Activated CD4-positive, alpha-beta T cell treated with anti-CD3 and anti-CD28 coated beads for 36 hours (primary cell): ENCODE measurements at regions of chr5 and their contacts with region 1.

Region 1: DNA sequence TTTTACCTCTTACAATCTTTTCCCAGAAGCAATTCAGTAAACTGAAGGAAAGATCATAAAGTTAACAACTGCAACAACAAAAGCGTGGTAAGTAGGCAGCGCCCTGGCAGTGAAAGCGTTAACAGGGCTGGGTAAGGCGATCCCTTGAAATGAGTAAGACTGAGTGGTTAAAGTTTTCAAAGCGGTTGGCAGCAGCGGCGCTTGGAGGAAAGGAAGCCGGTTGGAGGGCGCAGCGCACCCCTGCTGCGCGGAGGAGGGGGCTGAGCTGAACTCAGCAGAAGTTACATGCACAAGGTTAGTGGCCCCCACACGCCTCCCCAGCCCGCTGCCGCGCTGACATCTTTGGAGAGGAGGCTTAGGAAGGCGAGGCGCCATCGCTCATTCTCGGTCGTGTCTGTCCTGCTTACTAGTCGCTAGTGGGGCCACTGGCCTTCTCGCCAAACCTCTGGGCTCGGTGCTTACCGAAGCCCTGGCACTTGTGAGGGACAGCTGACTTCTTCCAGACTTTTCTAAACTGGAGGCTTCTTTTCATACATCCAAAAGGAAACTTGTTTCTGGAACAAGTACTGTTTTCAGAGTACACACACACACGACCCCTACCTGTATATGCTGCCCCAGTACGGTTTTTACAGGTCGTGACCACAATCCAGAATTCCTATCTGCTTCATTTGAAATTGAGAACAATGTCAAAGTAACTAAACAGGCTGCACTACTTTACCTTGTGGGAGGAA is at the start of gene SH3RF2:
- DNase-seq: peak; percentile 74
- ATAC-seq: peak; percentile 66
- H3K4me3 Mint-ChIP-seq: peak within 1 kb of the TSS; percentile 58
- H3K27ac Mint-ChIP-seq: peak within 1 kb of the TSS; percentile 63
- H3K4me1 Mint-ChIP-seq: peaks cover 37% of the 10 kb centered on the region
- H3K27me3 Mint-ChIP-seq: peaks cover 69% of the 10 kb centered on the region
- total RNA-seq, gene SH3RF2: 0.43 to 0.63 TPM

Region 2: GRCh38 chr5:145834917-145835847 is 101.4 kb before region 1 on chr5 and contains the start of gene PRELID2:
- CTCF ChIA-PET with region 1: no interaction called
- POLR2A ChIA-PET with region 1: no interaction called
- intact Hi-C with region 1: loop called in 1 of 2 experiments (anchors 5 kb)
- DNase-seq: peak; percentile 75
- ATAC-seq: peak; percentile 85
- H3K4me3 Mint-ChIP-seq: peak within 1 kb of the TSS; percentile 53
- H3K27ac Mint-ChIP-seq: no peak within 1 kb of the TSS
- H3K4me1 Mint-ChIP-seq: peaks cover 11% of the 10 kb centered on the region
- H3K27me3 Mint-ChIP-seq: peaks cover 13% of the 10 kb centered on the region
- total RNA-seq, gene PRELID2: 3.2 to 3.3 TPM

Region 3: GRCh38 chr5:146880966-146881365 is 944.4 kb after region 1 on chr5:
- CTCF ChIA-PET with region 1: no interaction called
- POLR2A ChIA-PET with region 1: no interaction called
- intact Hi-C with region 1: no loop called
- DNase-seq: no peak
- ATAC-seq: no peak
- H3K4me3 Mint-ChIP-seq: no peak overlapping the region
- H3K27ac Mint-ChIP-seq: no peak overlapping the region
- H3K4me1 Mint-ChIP-seq: peaks cover 8% of the 10 kb centered on the region
- H3K27me3 Mint-ChIP-seq: peaks cover 32% of the 10 kb centered on the region